Naive thymus-derived CD4-positive, alpha-beta T cell (primary cell): ENCODE measurements at regions of chr7 and their contacts with region 1.

Region 1: DNA sequence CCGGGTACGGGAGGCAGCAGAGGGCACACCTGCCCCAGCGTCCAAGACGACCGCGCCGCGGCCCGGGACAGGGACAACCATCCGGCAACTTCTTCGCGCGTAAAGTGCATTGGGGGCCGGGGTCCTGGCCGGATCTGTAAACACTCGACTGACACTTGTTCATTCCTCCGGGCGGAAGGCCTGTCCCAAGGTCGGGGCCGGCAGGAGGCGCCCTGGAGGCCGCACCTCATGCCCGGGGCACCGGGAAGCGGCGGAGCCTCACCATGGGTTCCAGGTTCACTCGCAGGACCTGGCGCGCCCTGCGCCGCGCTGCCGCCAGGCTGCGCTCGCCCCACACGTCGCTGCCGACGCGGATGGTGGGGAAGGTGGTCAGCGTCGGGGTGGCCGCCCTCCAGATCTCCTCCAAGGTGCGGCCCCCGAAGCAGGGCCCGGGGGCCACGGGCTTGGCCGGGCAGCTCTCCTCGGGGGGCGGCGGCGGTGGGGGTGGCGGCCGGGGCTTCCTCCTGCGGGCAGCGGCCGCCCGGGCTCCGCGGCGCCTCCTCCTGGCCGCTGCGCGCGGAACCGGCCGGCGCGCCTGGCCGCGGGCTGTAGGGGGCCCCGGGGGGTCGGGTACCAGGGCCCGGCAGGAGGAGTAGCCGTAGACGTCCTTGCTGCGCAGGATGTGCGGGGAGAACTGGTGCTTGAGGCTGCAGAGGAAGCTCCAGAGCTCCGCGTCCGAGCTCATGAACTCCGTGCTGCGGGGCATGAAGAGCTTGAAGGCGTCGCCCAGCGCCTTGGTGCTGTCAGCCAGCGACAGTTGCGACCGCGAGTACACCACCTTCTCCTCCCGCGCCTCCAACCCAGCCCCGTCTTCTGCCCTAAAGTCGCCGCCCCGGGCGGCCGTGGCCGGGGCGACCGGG is 746 bp downstream of the CCDC71L start:
- DNase-seq: peak; percentile 58 to 84 (median 68)
- ATAC-seq: peak; percentile 72
- H3K4me3 ChIP-seq: peak overlapping the region; percentile 73
- H3K4me3 Mint-ChIP-seq: peak overlapping the region; percentile 85 to 97 (median 91)
- H3K27ac ChIP-seq: peak overlapping the region; percentile 68
- H3K27ac Mint-ChIP-seq: peak overlapping the region; percentile 86 to 97 (median 92)
- H3K4me1 ChIP-seq: peaks cover 13 to 16% of the 10 kb centered on the region in 2 donors
- H3K4me1 Mint-ChIP-seq: peaks cover 0 to 41% (median 29%) of the 10 kb centered on the region in 7 donors
- H3K27me3 ChIP-seq: no peaks in the 10 kb centered on the region
- H3K27me3 Mint-ChIP-seq: peaks cover 0 to 3% (median 0%) of the 10 kb centered on the region in 5 donors

Region 2: DNA sequence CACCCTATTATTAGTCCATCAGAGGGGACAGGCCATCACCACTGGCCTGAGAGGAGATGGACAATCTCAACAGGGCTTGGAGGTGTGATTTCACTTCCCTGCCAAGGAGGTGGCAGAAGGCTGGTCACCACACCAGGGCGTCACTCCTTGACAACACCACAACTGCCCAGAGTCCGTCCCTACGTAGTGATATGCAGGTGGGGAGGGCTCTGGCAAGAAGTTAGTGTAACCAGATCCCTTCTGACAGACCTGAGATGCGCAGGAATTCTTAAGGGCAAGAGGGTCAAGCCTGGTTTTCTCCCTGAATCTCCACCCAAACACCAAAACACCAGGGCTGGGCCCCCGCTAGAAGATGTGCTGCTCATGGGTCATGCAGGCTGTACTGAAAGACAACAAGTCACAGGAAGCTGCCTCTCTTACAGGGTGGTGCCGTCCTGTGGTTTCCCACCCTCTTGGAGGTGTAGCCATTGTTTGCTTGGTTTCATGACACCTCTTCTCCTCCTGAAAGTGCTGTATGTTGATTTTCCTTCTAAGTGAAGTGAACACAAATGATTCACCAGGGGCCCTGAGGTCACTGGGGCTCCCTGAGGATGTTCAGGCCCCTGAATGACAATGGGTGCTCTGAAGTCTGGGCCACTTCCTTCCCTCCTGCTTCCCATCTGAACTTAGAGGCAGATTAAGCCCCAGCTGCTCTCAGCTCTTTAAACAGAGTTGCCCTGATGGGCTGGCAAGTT is 810.9 kb before region 1 on chr7:
- CTCF ChIA-PET with region 1: no interaction called
- POLR2A ChIA-PET with region 1: no interaction called
- intact Hi-C with region 1: no loop called
- DNase-seq: peak; percentile 16 to 69 (median 60)
- ATAC-seq: peak; percentile 94
- H3K4me3 ChIP-seq: peak overlapping the region; percentile 38
- H3K4me3 Mint-ChIP-seq: peak overlapping the region; percentile 74 to 85 (median 83)
- H3K27ac ChIP-seq: peak overlapping the region; percentile 43
- H3K27ac Mint-ChIP-seq: peak overlapping the region; percentile 82 to 98 (median 92)
- H3K4me1 ChIP-seq: peaks cover 46 to 47% of the 10 kb centered on the region in 2 donors
- H3K4me1 Mint-ChIP-seq: peaks cover 44 to 78% (median 69%) of the 10 kb centered on the region in 7 donors
- H3K27me3 ChIP-seq: no peaks in the 10 kb centered on the region
- H3K27me3 Mint-ChIP-seq: peaks cover 0 to 2% (median 0%) of the 10 kb centered on the region in 5 donors

Region 3: DNA sequence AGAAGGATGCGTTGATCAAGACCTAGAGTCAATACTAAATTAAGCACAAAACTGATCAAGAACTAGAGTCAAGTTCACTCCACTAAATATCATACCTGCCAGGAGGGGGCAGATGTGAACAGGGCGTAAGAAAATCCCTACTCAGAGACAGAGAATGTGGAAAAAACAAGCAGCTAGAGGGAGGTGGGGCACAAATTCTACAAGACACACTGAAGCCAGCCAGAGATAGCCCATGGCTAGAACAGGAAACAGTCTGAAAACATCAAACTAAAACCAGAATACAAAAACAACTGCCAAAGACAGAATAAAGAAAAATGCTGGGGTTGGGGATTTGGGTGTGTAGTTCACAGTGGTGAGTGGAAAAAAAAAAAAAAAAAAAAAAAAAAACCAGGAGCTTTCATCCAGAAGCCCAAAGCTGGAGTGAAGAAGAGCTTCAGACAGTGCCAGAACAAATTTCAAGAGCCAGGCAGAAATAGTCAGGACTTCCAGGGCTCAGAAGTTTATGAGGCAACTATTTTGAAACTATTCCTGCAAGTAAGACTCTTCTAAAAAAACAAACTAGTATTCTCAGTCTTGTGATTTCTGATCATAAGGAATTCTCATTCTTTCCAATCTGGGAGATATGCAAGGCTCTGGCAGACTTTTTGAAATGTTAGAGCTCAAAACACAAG is 117.5 kb before region 1 on chr7:
- CTCF ChIA-PET with region 1: no interaction called
- POLR2A ChIA-PET with region 1: no interaction called
- intact Hi-C with region 1: loop called (anchors 2 to 10 kb)
- DNase-seq: peak in 6 of 9 donors; percentile 14 to 35 (median 26)
- ATAC-seq: peak; percentile 81
- H3K4me3 ChIP-seq: no peak overlapping the region
- H3K4me3 Mint-ChIP-seq: no peak overlapping the region
- H3K27ac ChIP-seq: no peak overlapping the region
- H3K27ac Mint-ChIP-seq: peak overlapping the region in 4 of 9 donors; percentile 4 to 30 (median 12)
- H3K4me1 ChIP-seq: no peaks in the 10 kb centered on the region
- H3K4me1 Mint-ChIP-seq: peaks cover 0 to 10% (median 6%) of the 10 kb centered on the region in 7 donors
- H3K27me3 ChIP-seq: no peaks in the 10 kb centered on the region
- H3K27me3 Mint-ChIP-seq: peaks cover 0 to 6% (median 0%) of the 10 kb centered on the region in 5 donors

Region 4: DNA sequence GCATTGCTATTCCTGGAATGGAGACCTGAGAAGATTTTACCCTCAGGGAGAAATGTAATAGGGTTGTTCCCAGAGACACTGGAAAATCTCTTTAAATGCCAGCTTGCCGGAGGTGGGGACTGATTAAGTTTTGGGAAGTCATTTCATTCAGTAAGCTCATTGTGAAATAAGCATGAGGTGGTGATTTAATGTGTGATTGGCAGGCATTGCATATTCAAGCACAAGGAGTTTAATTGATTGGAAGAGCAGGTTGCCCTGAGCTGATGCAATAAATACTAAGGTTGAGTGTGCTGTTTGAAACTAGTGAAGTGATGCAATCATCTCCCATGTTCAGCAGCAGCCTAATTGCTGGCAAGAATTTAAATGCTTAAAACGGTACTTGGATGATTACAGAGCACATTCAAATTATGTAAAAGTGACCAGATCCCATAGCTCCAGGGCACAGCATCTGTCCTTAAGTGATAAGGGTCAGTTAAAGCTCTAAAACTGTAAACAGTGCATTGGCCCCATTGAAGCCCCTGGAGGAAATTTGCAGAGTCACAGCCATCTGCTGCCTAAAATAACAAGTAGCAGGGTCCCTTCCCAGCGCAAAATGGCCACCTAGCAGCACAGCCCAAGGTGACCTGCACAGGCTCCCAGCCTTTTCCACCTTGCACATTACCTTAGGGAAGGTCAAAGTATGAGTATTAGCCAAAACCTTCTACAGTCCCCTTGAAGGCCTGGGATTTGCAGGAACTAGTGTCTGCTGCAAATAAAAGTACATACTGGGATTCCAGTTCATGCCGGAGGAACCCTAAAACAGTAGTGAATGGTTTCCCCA is 91.3 kb before region 1 on chr7:
- CTCF ChIA-PET with region 1: no interaction called
- POLR2A ChIA-PET with region 1: no interaction called
- intact Hi-C with region 1: no loop called
- DNase-seq: no peak
- ATAC-seq: peak; percentile 32
- H3K4me3 ChIP-seq: no peak overlapping the region
- H3K4me3 Mint-ChIP-seq: no peak overlapping the region
- H3K27ac ChIP-seq: peak overlapping the region; percentile 21
- H3K27ac Mint-ChIP-seq: no peak overlapping the region
- H3K4me1 ChIP-seq: no peaks in the 10 kb centered on the region
- H3K4me1 Mint-ChIP-seq: peaks cover 0 to 10% (median 0%) of the 10 kb centered on the region in 7 donors
- H3K27me3 ChIP-seq: no peaks in the 10 kb centered on the region
- H3K27me3 Mint-ChIP-seq: peaks cover 4 to 23% (median 7%) of the 10 kb centered on the region in 5 donors

Region 5: GRCh38 chr7:106618480-106618879 is 41.7 kb before region 1 on chr7:
- CTCF ChIA-PET with region 1: no interaction called
- POLR2A ChIA-PET with region 1: no interaction called
- intact Hi-C with region 1: no loop called
- DNase-seq: no peak
- ATAC-seq: no peak
- H3K4me3 ChIP-seq: no peak overlapping the region
- H3K4me3 Mint-ChIP-seq: no peak overlapping the region
- H3K27ac ChIP-seq: no peak overlapping the region
- H3K27ac Mint-ChIP-seq: no peak overlapping the region
- H3K4me1 ChIP-seq: no peaks in the 10 kb centered on the region
- H3K4me1 Mint-ChIP-seq: no peaks in the 10 kb centered on the region
- H3K27me3 ChIP-seq: no peaks in the 10 kb centered on the region
- H3K27me3 Mint-ChIP-seq: peaks cover 0 to 12% (median 2%) of the 10 kb centered on the region in 5 donors

Region 6: DNA sequence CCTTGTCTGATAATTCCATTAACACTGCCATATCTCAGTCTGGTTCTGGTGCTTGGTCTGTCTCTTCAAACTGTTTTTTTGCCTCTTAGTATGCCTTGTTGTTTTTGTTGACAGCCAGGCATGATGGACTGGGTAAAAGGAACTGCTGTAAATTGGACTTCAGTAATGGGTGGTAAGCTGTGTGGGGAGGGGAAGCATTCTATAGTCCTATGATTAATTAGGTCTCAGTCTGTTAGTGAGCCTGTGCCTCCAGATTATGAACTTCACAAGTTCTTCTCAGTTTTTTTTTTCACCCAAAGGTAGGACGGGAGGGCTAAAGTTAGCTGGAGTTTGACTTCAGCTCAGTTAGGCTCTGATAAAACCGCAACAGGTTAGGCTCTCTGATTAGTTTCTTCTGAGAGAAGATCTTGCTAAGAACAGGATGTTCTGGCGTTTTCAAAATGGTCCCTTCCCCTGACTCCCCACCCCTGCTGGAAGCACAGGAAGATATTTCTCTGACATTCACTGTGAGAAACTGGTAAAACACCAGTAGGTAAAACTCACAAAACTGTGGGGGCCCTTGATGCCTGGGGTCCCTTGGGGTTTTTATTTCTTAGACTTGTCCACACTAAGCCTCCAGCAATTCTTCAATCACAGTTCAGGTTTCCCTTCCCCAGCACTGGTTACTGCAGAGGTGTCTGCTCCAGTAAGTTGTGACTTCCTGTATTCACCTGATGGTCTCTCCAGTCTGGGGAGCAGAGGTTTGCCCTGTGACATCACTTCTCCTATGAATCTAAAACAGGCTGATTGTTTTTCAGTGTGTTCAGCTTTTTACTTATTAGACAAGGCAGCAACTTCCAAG is 44.0 kb after region 1 on chr7:
- CTCF ChIA-PET with region 1: no interaction called
- POLR2A ChIA-PET with region 1: interaction called, 5 read pairs
- intact Hi-C with region 1: loop called in 1 of 2 experiments (anchors 1 kb)
- DNase-seq: peak in 7 of 9 donors; percentile 10 to 40 (median 34)
- ATAC-seq: peak; percentile 57
- H3K4me3 ChIP-seq: no peak overlapping the region
- H3K4me3 Mint-ChIP-seq: peak overlapping the region; percentile 10 to 69 (median 56)
- H3K27ac ChIP-seq: peak overlapping the region; percentile 54
- H3K27ac Mint-ChIP-seq: peak overlapping the region; percentile 5 to 90 (median 78)
- H3K4me1 ChIP-seq: peaks cover 0 to 8% of the 10 kb centered on the region in 2 donors
- H3K4me1 Mint-ChIP-seq: peaks cover 4 to 26% (median 20%) of the 10 kb centered on the region in 7 donors
- H3K27me3 ChIP-seq: no peaks in the 10 kb centered on the region
- H3K27me3 Mint-ChIP-seq: peaks cover 0 to 2% (median 0%) of the 10 kb centered on the region in 5 donors

Region 7: GRCh38 chr7:106736508-106737201 is 76.4 kb after region 1 on chr7:
- CTCF ChIA-PET with region 1: interaction called, 29 read pairs
- POLR2A ChIA-PET with region 1: no interaction called
- intact Hi-C with region 1: loop called (anchors 1 kb)
- DNase-seq: peak in 8 of 9 donors; percentile 21 to 65 (median 54)
- ATAC-seq: peak; percentile 95
- H3K4me3 ChIP-seq: no peak overlapping the region
- H3K4me3 Mint-ChIP-seq: peak overlapping the region in 5 of 10 donors; percentile 9 to 44 (median 22)
- H3K27ac ChIP-seq: no peak overlapping the region
- H3K27ac Mint-ChIP-seq: peak overlapping the region in 2 of 9 donors; percentile 32 to 80
- H3K4me1 ChIP-seq: peaks cover 0 to under 1% of the 10 kb centered on the region in 2 donors
- H3K4me1 Mint-ChIP-seq: peaks cover 10 to 19% (median 18%) of the 10 kb centered on the region in 7 donors
- H3K27me3 ChIP-seq: no peaks in the 10 kb centered on the region
- H3K27me3 Mint-ChIP-seq: no peaks in the 10 kb centered on the region

Region 8: GRCh38 chr7:106779877-106780276 is 119.7 kb after region 1 on chr7:
- CTCF ChIA-PET with region 1: no interaction called
- POLR2A ChIA-PET with region 1: no interaction called
- intact Hi-C with region 1: loop called in 1 of 2 experiments (anchors 5 kb)
- DNase-seq: no peak
- ATAC-seq: peak; percentile 18
- H3K4me3 ChIP-seq: no peak overlapping the region
- H3K4me3 Mint-ChIP-seq: no peak overlapping the region
- H3K27ac ChIP-seq: no peak overlapping the region
- H3K27ac Mint-ChIP-seq: no peak overlapping the region
- H3K4me1 ChIP-seq: no peaks in the 10 kb centered on the region
- H3K4me1 Mint-ChIP-seq: no peaks in the 10 kb centered on the region
- H3K27me3 ChIP-seq: no peaks in the 10 kb centered on the region
- H3K27me3 Mint-ChIP-seq: peaks cover 0 to 12% (median 4%) of the 10 kb centered on the region in 5 donors

Region 9: GRCh38 chr7:107150375-107151073 is 490.3 kb after region 1 on chr7:
- CTCF ChIA-PET with region 1: interaction called, 4 read pairs
- POLR2A ChIA-PET with region 1: no interaction called
- intact Hi-C with region 1: loop called in 1 of 2 experiments (anchors 5 kb)
- DNase-seq: peak; percentile 45 to 79 (median 72)
- ATAC-seq: peak; percentile 88
- H3K4me3 ChIP-seq: no peak overlapping the region
- H3K4me3 Mint-ChIP-seq: no peak overlapping the region
- H3K27ac ChIP-seq: no peak overlapping the region
- H3K27ac Mint-ChIP-seq: no peak overlapping the region
- H3K4me1 ChIP-seq: no peaks in the 10 kb centered on the region
- H3K4me1 Mint-ChIP-seq: peaks cover 0 to 12% (median 4%) of the 10 kb centered on the region in 7 donors
- H3K27me3 ChIP-seq: no peaks in the 10 kb centered on the region
- H3K27me3 Mint-ChIP-seq: peaks cover 0 to 7% (median 3%) of the 10 kb centered on the region in 5 donors

Region 10: GRCh38 chr7:107890962-107891635 is 1230.9 kb after region 1 on chr7 and contains the start of gene DLD:
- CTCF ChIA-PET with region 1: no interaction called
- POLR2A ChIA-PET with region 1: no interaction called
- intact Hi-C with region 1: loop called (anchors 1 to 10 kb)
- DNase-seq: peak; percentile 89 to 94 (median 93)
- ATAC-seq: peak; percentile 98
- H3K4me3 ChIP-seq: peak within 1 kb of the TSS; percentile 93
- H3K4me3 Mint-ChIP-seq: peak within 1 kb of the TSS; percentile 89 to 100 (median 97)
- H3K27ac ChIP-seq: peak within 1 kb of the TSS; percentile 97
- H3K27ac Mint-ChIP-seq: peak within 1 kb of the TSS; percentile 94 to 100 (median 98)
- H3K4me1 ChIP-seq: peaks cover 5 to 35% of the 10 kb centered on the region in 2 donors
- H3K4me1 Mint-ChIP-seq: peaks cover 20 to 55% (median 52%) of the 10 kb centered on the region in 7 donors
- H3K27me3 ChIP-seq: no peaks in the 10 kb centered on the region
- H3K27me3 Mint-ChIP-seq: peaks cover 0 to 3% (median 0%) of the 10 kb centered on the region in 5 donors
- total RNA-seq, gene DLD: 44.5 to 69.3 (median 53.7) TPM